ENCODE measurements at regions of chr17 and their contacts with region 1.

Region 1: DNA sequence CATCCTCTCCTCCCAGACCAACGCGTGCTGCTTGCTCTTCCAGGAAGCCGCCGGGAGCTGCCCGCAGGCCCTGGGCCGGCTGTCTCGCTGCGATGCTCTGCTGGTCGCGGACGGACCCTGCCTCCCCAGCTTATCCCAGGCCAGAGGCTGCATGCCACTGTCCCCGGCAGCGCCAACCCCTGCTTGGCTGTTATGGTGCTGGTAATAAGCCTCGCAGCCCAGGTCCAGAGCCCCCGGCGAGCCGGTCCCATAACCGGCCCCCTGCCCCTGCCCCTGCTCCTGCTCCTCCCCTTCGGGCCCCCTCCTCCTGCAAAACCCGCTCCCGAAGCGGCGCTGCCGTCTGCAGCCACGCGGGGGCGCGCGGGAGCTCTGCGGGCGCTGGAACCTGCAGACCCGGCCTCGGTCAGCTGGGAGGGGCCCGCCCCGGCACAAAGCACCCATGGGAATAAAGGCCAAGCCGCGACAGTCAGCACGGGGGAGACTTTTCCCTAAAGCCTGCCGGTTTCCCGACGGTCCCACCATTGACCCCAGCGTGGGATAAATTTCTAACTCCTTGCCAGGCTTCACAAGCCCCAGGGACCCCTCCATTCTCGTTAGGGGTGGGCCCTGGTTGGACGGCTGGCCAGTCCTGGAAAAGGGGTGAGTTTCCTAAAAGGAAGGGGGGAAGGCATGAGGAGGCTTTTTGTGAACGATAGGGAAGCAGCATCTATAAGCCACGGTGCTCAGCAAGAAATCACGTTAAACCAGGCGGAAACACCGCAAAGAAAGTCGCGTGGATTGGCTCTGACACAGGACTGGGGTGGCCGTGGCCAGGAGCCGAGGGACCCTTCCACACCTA is 11.2 kb downstream of the ENPP7 start:
- DNase-seq: peak; percentile 99
- H3K4me3 ChIP-seq: peak overlapping the region; percentile 50 to 55; a peak in 3 of 4 replicates
- H3K27ac ChIP-seq: peak overlapping the region in 1 of 2 experiments; percentile 29; a peak in 1 of 4 replicates
- H3K4me1 ChIP-seq: peaks cover 0 to 12% of the 10 kb centered on the region in 2 experiments; a peak in 1 of 4 replicates
- H3K27me3 ChIP-seq: peaks cover 42% of the 10 kb centered on the region
- CTCF ChIP-seq: peak; percentile 99
- EP300 ChIP-seq: no peak
- RAD21 ChIP-seq: peak; percentile 75

Region 2: GRCh38 chr17:79658811-79659207 is 83.2 kb before region 1 on chr17:
- CTCF ChIA-PET with region 1: no interaction called
- POLR2A ChIA-PET with region 1: no interaction called
- DNase-seq: peak; percentile 77
- H3K4me3 ChIP-seq: peak overlapping the region in 1 of 2 experiments; percentile 23; a peak in 1 of 4 replicates
- H3K27ac ChIP-seq: no peak overlapping the region
- H3K4me1 ChIP-seq: no peaks in the 10 kb centered on the region; a peak in 1 of 4 replicates
- H3K27me3 ChIP-seq: peaks cover 14% of the 10 kb centered on the region; the same call in 1 of the 2 replicates
- CTCF ChIP-seq: peak; percentile 45
- EP300 ChIP-seq: no peak
- RAD21 ChIP-seq: peak; percentile 55

Region 3: DNA sequence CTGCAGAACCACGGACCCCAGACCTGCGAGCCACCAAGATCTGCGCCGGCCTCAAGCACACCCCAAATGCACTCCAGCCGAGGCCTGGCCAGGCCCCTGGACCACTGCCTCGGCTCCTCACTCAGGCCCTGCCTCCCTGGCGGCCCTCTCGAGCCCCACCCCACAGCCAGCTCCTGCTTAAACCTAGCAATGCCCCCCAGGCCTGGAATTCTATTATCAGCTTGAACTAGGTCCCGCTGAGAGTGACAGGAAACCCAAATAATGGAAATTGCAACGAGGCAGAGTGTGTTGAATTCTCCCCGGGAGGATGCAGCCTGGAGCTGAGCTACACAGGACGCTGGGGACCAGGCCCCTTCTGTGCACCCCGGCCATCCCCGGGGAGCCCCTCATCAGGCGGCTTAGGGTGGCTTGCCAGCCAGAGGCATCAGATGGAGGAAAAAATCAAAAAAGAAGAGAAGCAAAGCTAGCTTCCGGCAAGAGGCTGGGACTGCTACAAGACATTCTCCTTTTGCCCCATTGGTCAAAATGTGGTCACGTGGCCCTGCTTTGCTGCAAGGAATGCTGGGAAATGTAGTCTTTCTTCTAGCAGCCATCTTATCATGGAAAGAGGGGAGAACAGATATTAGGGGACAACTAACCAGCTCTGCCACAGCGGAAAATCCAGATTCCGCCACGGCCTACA is 13.6 kb before region 1 on chr17:
- CTCF ChIA-PET with region 1: interaction called, 34 read pairs
- POLR2A ChIA-PET with region 1: no interaction called
- DNase-seq: peak; percentile 99
- H3K4me3 ChIP-seq: peak overlapping the region in 1 of 2 experiments; percentile 15; a peak in 1 of 4 replicates
- H3K27ac ChIP-seq: peak overlapping the region in 1 of 2 experiments; percentile 47; a peak in 1 of 4 replicates
- H3K4me1 ChIP-seq: peaks cover 0 to 8% of the 10 kb centered on the region in 2 experiments; a peak in 1 of 4 replicates
- H3K27me3 ChIP-seq: no peaks in the 10 kb centered on the region
- CTCF ChIP-seq: no peak
- EP300 ChIP-seq: no peak
- RAD21 ChIP-seq: no peak

Region 4: DNA sequence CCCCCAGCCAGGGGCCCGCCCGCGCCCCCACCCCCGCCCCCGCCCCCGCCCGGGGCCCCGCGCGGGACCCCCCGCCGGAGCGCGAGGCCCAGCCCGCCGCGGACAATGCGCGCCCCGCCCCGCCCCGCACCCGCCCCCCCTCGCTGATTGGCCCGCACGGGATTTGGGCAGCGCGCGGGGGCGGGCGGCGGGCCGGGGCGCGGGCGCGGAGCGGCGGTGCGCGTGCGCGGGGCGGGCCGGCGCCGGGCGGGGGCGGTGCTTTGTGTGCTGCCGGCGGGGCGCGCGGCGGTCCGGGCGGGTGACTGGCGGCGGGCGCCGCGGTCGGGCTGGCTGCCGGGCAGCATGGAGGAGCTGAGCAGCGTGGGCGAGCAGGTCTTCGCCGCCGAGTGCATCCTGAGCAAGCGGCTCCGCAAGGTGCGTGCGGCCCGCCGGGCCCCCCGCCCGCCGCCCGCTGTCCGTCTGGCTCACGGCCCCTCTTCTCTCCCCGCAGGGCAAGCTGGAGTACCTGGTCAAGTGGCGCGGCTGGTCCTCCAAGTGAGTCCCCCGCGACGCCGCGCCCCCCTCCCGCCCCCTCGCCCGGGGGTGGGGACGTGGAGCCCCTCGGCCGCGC is 36.0 kb after region 1 on chr17 and contains the start of gene CBX2:
- CTCF ChIA-PET with region 1: interaction called, 82 read pairs
- POLR2A ChIA-PET with region 1: interaction called, 8 read pairs
- DNase-seq: peak; percentile 100
- H3K4me3 ChIP-seq: peak within 1 kb of the TSS; percentile 84 to 93
- H3K27ac ChIP-seq: peak within 1 kb of the TSS; percentile 7 to 83; a peak in 2 of 4 replicates
- H3K4me1 ChIP-seq: peaks cover 0 to 20% of the 10 kb centered on the region in 2 experiments; a peak in 3 of 4 replicates
- H3K27me3 ChIP-seq: peaks cover 23% of the 10 kb centered on the region
- CTCF ChIP-seq: peak; percentile 27; the same call in 1 of the 2 replicates
- EP300 ChIP-seq: no peak
- RAD21 ChIP-seq: no peak
- polyA plus RNA-seq, gene CBX2: 19.7 and 22.4 TPM in 2 replicates

Region 5: DNA sequence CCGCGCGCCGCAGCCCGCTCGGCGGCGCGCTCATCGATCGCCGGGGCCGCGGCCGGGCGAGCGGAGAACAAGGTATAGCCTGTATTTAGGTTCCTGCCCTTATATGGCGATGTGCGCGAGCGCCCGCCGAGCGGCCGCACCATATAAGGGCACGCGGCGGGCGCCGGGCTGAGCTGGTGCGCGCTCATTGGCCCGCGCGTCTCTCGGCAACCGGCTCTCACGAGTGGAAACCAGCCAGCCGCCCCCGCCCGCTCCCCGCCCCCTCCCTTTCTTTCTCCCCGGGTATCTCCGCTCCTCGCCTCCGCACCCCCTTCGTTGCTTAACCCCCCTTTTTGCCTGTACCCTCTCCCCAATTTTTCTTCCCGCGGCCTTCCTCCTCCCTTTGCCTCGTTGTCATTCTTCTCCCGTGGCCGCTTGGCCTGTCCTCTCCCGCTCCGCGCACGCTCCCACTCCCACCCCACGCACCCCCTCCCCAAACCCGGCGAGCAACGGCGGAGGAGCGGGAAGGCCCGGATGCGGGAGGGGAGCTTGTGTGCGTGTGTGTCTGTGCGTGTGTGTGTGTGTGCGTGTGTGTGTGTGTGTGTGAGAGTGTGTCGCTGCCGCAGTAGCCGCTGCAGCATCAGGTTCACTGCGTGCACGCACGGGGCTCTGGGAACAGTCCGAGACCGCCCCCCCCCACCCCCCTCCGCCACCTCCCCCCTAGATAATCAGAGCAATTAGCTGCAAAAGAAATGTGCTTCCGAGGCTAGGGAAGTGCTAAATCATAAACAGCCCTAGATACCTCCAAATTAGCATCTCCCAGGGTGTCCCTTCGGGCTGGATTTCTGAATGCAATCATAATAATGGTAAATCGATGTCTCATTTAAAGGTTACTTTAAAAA is 68.4 kb after region 1 on chr17:
- CTCF ChIA-PET with region 1: interaction called, 216 read pairs
- POLR2A ChIA-PET with region 1: interaction called, 9 read pairs
- DNase-seq: peak; percentile 97
- H3K4me3 ChIP-seq: peak overlapping the region; percentile 51 to 64
- H3K27ac ChIP-seq: peak overlapping the region in 1 of 2 experiments; percentile 90; a peak in 2 of 4 replicates
- H3K4me1 ChIP-seq: peaks cover 15 to 41% of the 10 kb centered on the region in 2 experiments
- H3K27me3 ChIP-seq: peaks cover 43% of the 10 kb centered on the region
- CTCF ChIP-seq: no peak
- EP300 ChIP-seq: no peak; a peak in 1 of 4 replicates
- RAD21 ChIP-seq: no peak

Region 6: GRCh38 chr17:79915850-79916430 is 174.0 kb after region 1 on chr17:
- CTCF ChIA-PET with region 1: interaction called, 15 read pairs
- POLR2A ChIA-PET with region 1: no interaction called
- DNase-seq: no peak
- H3K4me3 ChIP-seq: no peak overlapping the region
- H3K27ac ChIP-seq: no peak overlapping the region
- H3K4me1 ChIP-seq: peaks cover 9 to 27% of the 10 kb centered on the region in 2 experiments; a peak in 2 of 4 replicates
- H3K27me3 ChIP-seq: no peaks in the 10 kb centered on the region
- CTCF ChIP-seq: peak; percentile 35
- EP300 ChIP-seq: no peak
- RAD21 ChIP-seq: peak; percentile 58